ENCODE measurements at regions of chr1 and their contacts with region 1.

Region 1: DNA sequence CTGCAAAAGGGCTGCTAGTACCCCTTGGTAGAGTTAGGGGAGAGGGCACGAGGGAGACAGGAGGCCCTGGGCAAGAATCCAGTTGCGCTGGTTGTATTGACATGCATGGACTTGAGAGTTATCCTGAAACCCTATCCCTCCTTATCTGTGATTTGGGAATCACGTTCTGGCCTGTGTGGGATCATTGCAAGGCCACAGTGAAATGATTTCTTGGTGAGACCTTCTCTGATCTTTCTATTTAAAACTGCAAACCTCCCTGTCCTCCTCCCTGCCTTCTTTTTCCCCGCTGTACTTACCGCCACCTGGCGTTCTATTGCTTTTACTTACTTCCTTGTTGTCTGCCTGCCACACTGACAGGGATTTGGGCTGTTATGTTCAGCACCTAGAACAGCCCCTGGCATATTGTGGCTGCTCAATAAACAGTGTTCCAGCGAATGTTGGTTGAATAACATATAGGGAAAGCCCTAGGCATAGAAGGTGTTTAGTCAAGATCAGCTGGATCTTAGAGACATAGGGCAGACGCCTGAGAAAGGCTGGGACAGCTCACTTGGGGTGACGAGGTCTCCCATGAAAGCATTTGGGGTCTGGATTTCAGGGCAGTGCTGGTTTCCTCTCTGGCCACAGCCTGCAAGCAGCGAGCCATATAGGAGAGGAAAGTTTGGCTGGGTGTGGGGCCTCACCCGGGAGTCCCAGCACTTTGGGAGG is 25.6 kb downstream of the ALPL start:
- DNase-seq: peak; percentile 65 to 79 (median 78)
- H3K4me3 ChIP-seq: no peak overlapping the region
- H3K27ac ChIP-seq: no peak overlapping the region
- H3K4me1 ChIP-seq: no peaks in the 10 kb centered on the region
- H3K27me3 ChIP-seq: peaks cover 0 to 54% (median 10%) of the 10 kb centered on the region in 5 experiments

Region 2: GRCh38 chr1:21524686-21525339 is 10.0 kb before region 1 on chr1:
- CTCF ChIA-PET with region 1: interaction called, 10 read pairs
- POLR2A ChIA-PET with region 1: no interaction called
- DNase-seq: peak in 2 of 3 donors; percentile 25 to 29
- H3K4me3 ChIP-seq: peak overlapping the region in 1 of 7 experiments; percentile 41
- H3K27ac ChIP-seq: no peak overlapping the region
- H3K4me1 ChIP-seq: peaks cover 0 to 13% (median 11%) of the 10 kb centered on the region in 4 experiments
- H3K27me3 ChIP-seq: peaks cover 0 to 7% (median 0%) of the 10 kb centered on the region in 5 experiments

Region 3: DNA sequence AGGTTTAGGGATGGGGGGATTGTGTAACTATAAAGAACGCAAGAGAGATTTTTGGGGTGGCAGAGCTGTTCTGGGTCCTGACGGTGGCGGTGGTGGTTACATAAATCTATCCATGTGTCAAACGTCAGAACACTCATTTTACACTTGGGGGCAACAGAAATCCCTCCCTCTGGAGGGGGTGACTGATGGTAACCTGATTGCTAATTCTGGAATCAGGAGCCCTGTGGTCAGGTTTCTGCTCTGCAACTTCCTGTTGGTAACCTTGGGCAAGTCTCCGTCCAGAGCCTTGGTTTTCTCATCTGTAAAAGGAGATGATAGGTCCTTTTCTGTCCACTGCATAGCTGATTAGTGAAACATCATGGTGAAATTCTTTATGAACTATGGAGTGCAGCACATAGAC is 15.3 kb after region 1 on chr1:
- CTCF ChIA-PET with region 1: interaction called, 10 read pairs
- POLR2A ChIA-PET with region 1: no interaction called
- DNase-seq: peak in 2 of 3 donors; percentile 39 to 43
- H3K4me3 ChIP-seq: no peak overlapping the region
- H3K27ac ChIP-seq: no peak overlapping the region
- H3K4me1 ChIP-seq: peaks cover 12 to 29% (median 17%) of the 10 kb centered on the region in 4 experiments
- H3K27me3 ChIP-seq: peaks cover 0 to 47% (median 12%) of the 10 kb centered on the region in 5 experiments